Sigmoid colon (tissue), 7 donors: ENCODE measurements at regions of chr6 and their contacts with region 1.

Region 1: DNA sequence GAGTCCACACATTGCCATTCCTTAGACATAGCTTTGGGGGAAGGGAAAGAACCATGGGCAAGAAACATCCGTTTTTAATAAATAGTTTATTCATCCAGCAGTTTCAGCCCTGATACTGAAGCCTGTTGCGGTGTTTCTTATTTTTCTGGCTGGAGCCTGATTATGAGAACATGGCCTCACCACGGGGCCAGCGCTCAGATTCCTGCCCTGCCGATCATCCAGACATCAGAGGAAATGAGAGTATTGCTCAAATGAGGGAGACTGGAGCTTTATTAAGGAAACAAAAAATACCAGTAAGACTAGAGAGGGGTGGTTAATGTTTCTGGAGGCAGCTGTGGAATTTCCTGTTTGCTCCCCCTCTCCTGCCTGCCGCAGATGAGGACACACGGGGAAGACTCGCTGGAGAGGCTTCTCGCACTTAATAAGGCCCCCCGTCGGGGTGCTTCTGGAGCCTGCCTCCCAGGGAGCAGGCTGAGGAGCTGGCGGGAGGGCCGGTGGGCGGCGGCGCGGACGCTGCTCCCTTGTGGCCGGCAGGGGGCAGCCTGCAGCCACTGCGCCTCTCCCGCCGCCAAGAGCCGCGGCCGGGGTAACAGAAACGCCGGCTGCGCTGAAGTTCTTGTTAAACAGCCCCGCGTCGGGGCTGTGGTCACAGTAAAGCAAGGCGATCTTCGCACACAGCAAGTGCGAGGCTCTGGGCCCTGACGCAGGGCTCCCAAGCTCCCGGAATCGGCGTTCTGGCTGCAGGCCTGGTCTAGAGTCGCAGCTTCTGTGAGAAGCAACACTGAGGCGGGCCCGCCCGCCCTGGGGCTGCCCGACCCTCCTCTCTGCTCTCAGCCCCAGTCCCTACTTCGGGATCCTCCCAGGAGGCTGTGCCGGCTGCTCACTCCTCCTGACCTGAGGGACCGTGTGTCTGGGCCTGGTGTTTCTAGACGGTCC is 17.5 kb downstream of the LEMD2 start:
- DNase-seq: peak; percentile 89
- H3K4me3 ChIP-seq: peak overlapping the region in 1 of 4 donors; percentile 9
- H3K27ac ChIP-seq: peak overlapping the region; percentile 43 to 75 (median 67)
- H3K4me1 ChIP-seq: peaks cover 0 to 43% (median 36%) of the 10 kb centered on the region in 4 donors
- H3K27me3 ChIP-seq: peaks cover 0 to 9% (median 0%) of the 10 kb centered on the region in 3 donors
- CTCF ChIP-seq: peak; percentile 82 to 97 (median 87)
- EP300 ChIP-seq: no peak
- POLR2A ChIP-seq: no peak

Region 2: GRCh38 chr6:33547499-33547898 is 223.9 kb before region 1 on chr6:
- intact Hi-C with region 1: no loop called
- DNase-seq: no peak
- H3K4me3 ChIP-seq: no peak overlapping the region
- H3K27ac ChIP-seq: no peak overlapping the region
- H3K4me1 ChIP-seq: no peaks in the 10 kb centered on the region
- H3K27me3 ChIP-seq: no peaks in the 10 kb centered on the region
- CTCF ChIP-seq: no peak
- EP300 ChIP-seq: no peak
- POLR2A ChIP-seq: no peak

Region 3: GRCh38 chr6:33886673-33887144 is 115.3 kb after region 1 on chr6:
- intact Hi-C with region 1: loop called (anchors 5 kb)
- DNase-seq: peak; percentile 83
- H3K4me3 ChIP-seq: no peak overlapping the region
- H3K27ac ChIP-seq: peak overlapping the region in 3 of 4 donors; percentile 62 to 69 (median 67)
- H3K4me1 ChIP-seq: peaks cover 0 to 50% (median 47%) of the 10 kb centered on the region in 4 donors
- H3K27me3 ChIP-seq: no peaks in the 10 kb centered on the region
- CTCF ChIP-seq: no peak
- EP300 ChIP-seq: peak; percentile 38 to 92 (median 88)
- POLR2A ChIP-seq: no peak

Region 4: GRCh38 chr6:34027445-34027936 is 256.1 kb after region 1 on chr6:
- intact Hi-C with region 1: loop called (anchors 1 kb)
- DNase-seq: no peak
- H3K4me3 ChIP-seq: no peak overlapping the region
- H3K27ac ChIP-seq: no peak overlapping the region
- H3K4me1 ChIP-seq: no peaks in the 10 kb centered on the region
- H3K27me3 ChIP-seq: peaks cover 0 to 5% (median 0%) of the 10 kb centered on the region in 3 donors
- CTCF ChIP-seq: peak; percentile 71 to 95 (median 84)
- EP300 ChIP-seq: no peak
- POLR2A ChIP-seq: no peak

Region 5: DNA sequence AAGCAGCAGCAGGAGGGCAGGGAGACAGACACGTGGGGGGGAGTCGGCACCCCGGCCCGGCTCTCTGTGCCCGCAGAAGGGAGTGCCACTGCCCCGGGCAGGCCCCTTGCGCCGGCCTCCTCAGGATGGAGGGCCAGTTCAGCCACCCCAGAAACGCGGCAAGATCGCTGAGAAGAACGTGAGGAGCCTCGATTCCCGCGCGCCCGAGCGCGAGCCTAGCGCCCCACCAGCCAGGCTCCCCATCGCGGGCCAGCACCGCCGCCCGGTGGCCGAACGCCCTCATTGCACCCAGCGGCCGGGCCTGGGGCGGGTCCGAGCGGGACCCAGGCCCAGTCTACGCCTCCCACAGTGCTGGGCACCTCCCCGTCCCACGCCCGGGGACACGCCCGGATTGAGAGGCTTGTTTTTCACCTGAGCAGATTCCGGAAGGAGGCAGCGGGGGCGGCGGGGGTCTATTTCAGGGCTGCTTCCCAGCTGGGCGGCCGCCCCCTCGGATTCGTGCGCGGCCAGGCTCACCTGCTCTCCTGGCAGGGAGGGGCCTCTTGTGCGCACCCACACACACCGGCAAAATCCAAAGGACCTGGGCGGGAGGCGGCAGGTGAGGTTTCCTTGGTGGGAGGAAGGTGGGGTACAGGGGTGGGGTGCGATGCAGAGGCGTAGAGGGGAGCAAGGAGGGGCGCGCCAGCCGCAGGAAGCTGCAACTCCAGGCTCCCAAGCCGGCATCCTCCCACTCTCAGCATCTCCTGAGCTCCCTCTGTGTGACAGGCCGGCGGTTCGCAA is 383.4 kb after region 1 on chr6:
- intact Hi-C with region 1: loop called (anchors 2 kb)
- DNase-seq: peak; percentile 69
- H3K4me3 ChIP-seq: peak overlapping the region in 1 of 4 donors; percentile 12
- H3K27ac ChIP-seq: no peak overlapping the region
- H3K4me1 ChIP-seq: peaks cover 0 to 11% (median 7%) of the 10 kb centered on the region in 4 donors
- H3K27me3 ChIP-seq: peaks cover 14 to 59% (median 53%) of the 10 kb centered on the region in 3 donors
- CTCF ChIP-seq: peak; percentile 80 to 96 (median 89)
- EP300 ChIP-seq: no peak
- POLR2A ChIP-seq: no peak